Aorta (tissue), 5 donors: ENCODE measurements at regions of chr1 and their contacts with region 1.

Region 1: GRCh38 chr1:14968251-14968851 is 185.2 kb upstream of the TMEM51 start:
- DNase-seq: peak; percentile 86 to 87
- ATAC-seq: peak; percentile 87
- H3K4me3 ChIP-seq: no peak overlapping the region
- H3K27ac ChIP-seq: peak overlapping the region in 1 of 2 donors; percentile 98
- H3K4me1 ChIP-seq: peaks cover 4 to 7% of the 10 kb centered on the region in 2 donors
- H3K27me3 ChIP-seq: no peaks in the 10 kb centered on the region

Region 2: GRCh38 chr1:14949836-14950713 is 18.3 kb before region 1 on chr1:
- intact Hi-C with region 1: loop called in 1 of 2 experiments (anchors 1 kb)
- DNase-seq: no peak
- ATAC-seq: peak; percentile 12
- H3K4me3 ChIP-seq: no peak overlapping the region
- H3K27ac ChIP-seq: peak overlapping the region in 1 of 2 donors; percentile 68
- H3K4me1 ChIP-seq: peaks cover 0 to 2% of the 10 kb centered on the region in 2 donors
- H3K27me3 ChIP-seq: no peaks in the 10 kb centered on the region